T-cell (primary cell): ENCODE measurements at regions of chr19 and their contacts with region 1.

Region 1: DNA sequence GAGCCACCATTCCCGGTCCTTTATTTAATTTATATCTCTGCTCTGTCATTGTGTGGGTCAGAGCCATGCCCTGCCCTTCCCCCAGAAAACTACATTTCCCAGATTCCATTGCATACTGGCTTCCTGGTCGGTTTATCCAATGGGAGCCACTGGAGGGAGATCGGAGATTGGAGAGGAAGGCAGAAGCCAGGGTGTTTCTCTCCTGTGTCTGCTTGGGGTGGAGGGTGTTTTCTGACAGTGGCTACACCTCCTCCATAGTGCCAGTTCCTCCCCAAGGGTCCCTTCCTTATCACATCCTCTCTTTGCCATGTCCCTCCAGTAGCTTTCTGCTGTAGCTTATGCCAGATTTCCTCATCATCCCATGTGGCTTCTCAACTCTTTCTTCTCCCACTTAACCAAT is 19.0 kb downstream of the OLFM2 start:
- DNase-seq: no peak
- ATAC-seq: no peak
- H3K4me3 ChIP-seq: no peak overlapping the region
- H3K4me3 Mint-ChIP-seq: no peak overlapping the region
- H3K27ac ChIP-seq: no peak overlapping the region
- H3K27ac Mint-ChIP-seq: no peak overlapping the region
- H3K4me1 ChIP-seq: peaks cover 0 to 18% of the 10 kb centered on the region in 2 experiments
- H3K4me1 Mint-ChIP-seq: peaks cover 7 to 11% (median 10%) of the 10 kb centered on the region in 3 donors
- H3K27me3 ChIP-seq: peaks cover 2 to 68% of the 10 kb centered on the region in 2 experiments
- H3K27me3 Mint-ChIP-seq: peaks cover 23 to 37% of the 10 kb centered on the region in 2 donors

Region 2: DNA sequence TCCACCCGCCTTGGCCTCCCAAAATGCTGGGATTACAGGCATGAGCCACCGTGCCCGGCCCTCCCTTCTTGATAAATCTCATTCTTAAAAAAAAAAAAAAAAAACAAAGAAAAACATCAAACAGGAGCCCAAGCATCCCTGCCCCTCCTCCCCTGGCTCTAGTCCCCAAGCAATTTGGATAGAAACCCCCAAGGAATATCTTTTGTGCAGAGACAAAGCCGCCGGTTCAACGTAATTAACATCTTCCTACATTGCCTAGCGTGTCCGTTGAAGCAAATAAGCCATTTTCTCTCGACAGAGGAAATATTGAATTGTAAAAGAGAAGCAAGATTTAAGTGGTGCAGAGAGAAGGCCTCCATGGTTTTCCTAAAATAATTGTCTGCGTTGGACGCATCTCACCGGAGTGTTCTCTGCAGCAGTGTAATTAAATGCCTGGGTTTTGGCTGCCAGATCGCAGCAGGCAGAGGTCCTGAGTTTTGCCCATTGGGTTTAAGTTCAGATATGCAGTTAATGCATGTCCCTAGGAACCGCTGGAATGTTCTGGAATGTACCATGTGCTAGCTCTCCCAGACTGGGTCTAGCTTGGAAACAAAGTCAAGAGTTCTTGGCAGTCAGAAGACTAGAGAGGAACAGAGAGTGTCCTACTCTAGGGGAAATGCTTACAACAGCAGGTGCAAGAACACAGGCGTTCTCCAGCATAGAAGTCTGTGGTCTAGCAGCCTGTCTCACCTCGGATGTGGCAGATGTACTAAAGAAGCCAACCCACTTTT is 51.4 kb before region 1 on chr19:
- CTCF ChIA-PET with region 1: no interaction called
- POLR2A ChIA-PET with region 1: interaction called in 1 of 2 experiments, 13 read pairs
- DNase-seq: peak in 34 of 35 experiments; percentile 35 to 76 (median 53)
- ATAC-seq: peak; percentile 84 to 94 (median 90)
- H3K4me3 ChIP-seq: peak overlapping the region in 1 of 2 donors; percentile 29
- H3K4me3 Mint-ChIP-seq: peak overlapping the region; percentile 29 to 56 (median 49)
- H3K27ac ChIP-seq: no peak overlapping the region
- H3K27ac Mint-ChIP-seq: peak overlapping the region; percentile 89 to 90
- H3K4me1 ChIP-seq: peaks cover 42 to 66% of the 10 kb centered on the region in 2 experiments
- H3K4me1 Mint-ChIP-seq: peaks cover 52 to 61% (median 58%) of the 10 kb centered on the region in 3 donors
- H3K27me3 ChIP-seq: no peaks in the 10 kb centered on the region
- H3K27me3 Mint-ChIP-seq: no peaks in the 10 kb centered on the region

Region 3: DNA sequence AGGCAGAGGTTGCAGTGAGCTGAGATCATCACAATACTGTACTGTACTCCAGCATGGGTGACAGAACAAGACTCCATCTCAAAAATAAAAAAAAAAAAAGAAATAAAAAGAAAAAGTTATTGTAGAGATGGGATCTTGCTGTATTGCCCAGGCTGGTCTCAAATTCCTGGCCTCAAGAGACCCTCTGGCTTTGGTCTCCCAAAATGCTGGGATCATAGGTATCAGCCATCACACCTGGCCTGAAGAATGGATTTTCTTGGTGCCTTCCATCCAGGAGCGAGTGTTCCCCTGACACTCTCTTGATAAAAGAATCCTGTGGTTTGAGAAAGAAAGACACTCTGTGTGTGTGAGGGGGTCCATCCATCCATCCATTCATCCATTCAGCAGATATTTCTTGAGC is 14.3 kb after region 1 on chr19:
- CTCF ChIA-PET with region 1: interaction called in 1 of 2 experiments, 11 read pairs
- POLR2A ChIA-PET with region 1: no interaction called
- DNase-seq: no peak
- ATAC-seq: no peak
- H3K4me3 ChIP-seq: no peak overlapping the region
- H3K4me3 Mint-ChIP-seq: no peak overlapping the region
- H3K27ac ChIP-seq: no peak overlapping the region
- H3K27ac Mint-ChIP-seq: no peak overlapping the region
- H3K4me1 ChIP-seq: peaks cover 0 to 32% of the 10 kb centered on the region in 2 experiments
- H3K4me1 Mint-ChIP-seq: peaks cover 25 to 29% (median 27%) of the 10 kb centered on the region in 3 donors
- H3K27me3 ChIP-seq: peaks cover 0 to 57% of the 10 kb centered on the region in 2 experiments
- H3K27me3 Mint-ChIP-seq: peaks cover 41 to 43% of the 10 kb centered on the region in 2 donors

Region 4: GRCh38 chr19:10270616-10271394 is 353.5 kb after region 1 on chr19 and contains the start of gene ICAM1:
- CTCF ChIA-PET with region 1: no interaction called
- POLR2A ChIA-PET with region 1: no interaction called
- DNase-seq: peak in 34 of 35 experiments; percentile 46 to 84 (median 64)
- ATAC-seq: peak; percentile 64 to 73 (median 69)
- H3K4me3 ChIP-seq: peak within 1 kb of the TSS; percentile 60 to 81
- H3K4me3 Mint-ChIP-seq: peak within 1 kb of the TSS; percentile 81 to 84 (median 81)
- H3K27ac ChIP-seq: peak within 1 kb of the TSS; percentile 94
- H3K27ac Mint-ChIP-seq: peak within 1 kb of the TSS; percentile 82 to 87
- H3K4me1 ChIP-seq: peaks cover 3 to 36% of the 10 kb centered on the region in 2 experiments
- H3K4me1 Mint-ChIP-seq: peaks cover 22 to 33% (median 27%) of the 10 kb centered on the region in 3 donors
- H3K27me3 ChIP-seq: no peaks in the 10 kb centered on the region
- H3K27me3 Mint-ChIP-seq: no peaks in the 10 kb centered on the region
- total RNA-seq, gene ICAM1: 4.2 to 11.0 (median 5.9) TPM